ENCODE measurements at regions of chr12 and their contacts with region 1.

Region 1: GRCh38 chr12:120847392-120847791 is 56.8 kb downstream of the SPPL3 start:
- DNase-seq: no peak
- H3K4me3 Mint-ChIP-seq: no peak overlapping the region
- H3K27ac Mint-ChIP-seq: no peak overlapping the region
- H3K4me1 Mint-ChIP-seq: peaks cover 26% of the 10 kb centered on the region
- H3K27me3 Mint-ChIP-seq: no peaks in the 10 kb centered on the region

Region 2: DNA sequence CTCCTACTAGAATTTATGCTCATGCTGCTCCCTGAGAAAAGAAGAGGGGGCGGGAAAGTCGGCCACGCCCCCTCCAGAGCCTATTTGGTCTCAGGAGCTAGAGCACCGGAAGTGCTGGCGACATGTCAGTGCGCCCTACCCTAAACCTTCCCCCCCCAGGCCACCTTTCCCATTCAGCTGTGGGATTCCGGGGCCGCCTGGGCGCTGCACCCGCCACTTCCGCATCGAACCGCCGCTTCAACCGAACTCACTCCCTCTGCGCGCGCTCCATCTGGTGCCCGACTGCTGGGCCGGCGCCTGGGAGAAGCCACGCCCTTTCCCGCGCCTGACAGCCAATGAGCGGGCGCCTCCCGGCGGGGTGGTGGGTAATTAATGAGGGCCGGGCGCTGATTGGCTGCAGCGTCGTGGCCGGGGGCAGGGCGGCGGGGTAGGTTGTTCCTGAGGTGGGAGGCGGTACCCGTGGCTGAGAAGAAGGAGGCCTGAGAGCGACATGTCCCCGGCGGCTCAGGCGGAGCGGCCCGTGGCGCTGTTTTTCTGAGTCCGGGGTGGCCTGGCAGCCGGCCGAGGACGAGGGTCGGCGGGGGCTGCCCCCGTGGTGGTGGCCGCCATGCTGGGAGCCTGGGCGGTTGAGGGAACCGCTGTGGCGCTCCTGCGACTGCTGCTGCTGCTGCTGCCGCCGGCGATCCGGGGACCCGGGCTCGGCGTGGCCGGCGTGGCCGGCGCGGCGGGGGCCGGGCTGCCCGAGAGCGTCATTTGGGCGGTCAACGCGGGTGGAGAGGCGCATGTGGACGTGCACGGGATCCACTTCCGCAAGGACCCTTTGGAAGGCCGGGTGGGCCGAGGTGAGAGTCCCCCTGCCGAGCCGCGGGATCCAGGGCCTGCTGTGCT is 160.5 kb before region 1 on chr12 and contains the start of gene MLEC:
- CTCF ChIA-PET with region 1: no interaction called
- POLR2A ChIA-PET with region 1: no interaction called
- DNase-seq: peak; percentile 100
- H3K4me3 Mint-ChIP-seq: peak within 1 kb of the TSS; percentile 87
- H3K27ac Mint-ChIP-seq: peak within 1 kb of the TSS; percentile 87
- H3K4me1 Mint-ChIP-seq: peaks cover 63% of the 10 kb centered on the region
- H3K27me3 Mint-ChIP-seq: no peaks in the 10 kb centered on the region
- total RNA-seq, gene MLEC: 81.1 to 97.8 TPM

Region 3: GRCh38 chr12:120713861-120714482 is 133.4 kb before region 1 on chr12:
- CTCF ChIA-PET with region 1: no interaction called
- POLR2A ChIA-PET with region 1: no interaction called
- DNase-seq: peak; percentile 74
- H3K4me3 Mint-ChIP-seq: no peak overlapping the region
- H3K27ac Mint-ChIP-seq: no peak overlapping the region
- H3K4me1 Mint-ChIP-seq: peaks cover 43% of the 10 kb centered on the region
- H3K27me3 Mint-ChIP-seq: no peaks in the 10 kb centered on the region

Region 4: GRCh38 chr12:120833849-120834248 is 13.5 kb before region 1 on chr12:
- CTCF ChIA-PET with region 1: interaction called, 5 read pairs
- POLR2A ChIA-PET with region 1: interaction called, 12 read pairs
- DNase-seq: no peak
- H3K4me3 Mint-ChIP-seq: no peak overlapping the region
- H3K27ac Mint-ChIP-seq: no peak overlapping the region
- H3K4me1 Mint-ChIP-seq: peaks cover 31% of the 10 kb centered on the region
- H3K27me3 Mint-ChIP-seq: no peaks in the 10 kb centered on the region

Region 5: GRCh38 chr12:121499929-121500793 is 652.8 kb after region 1 on chr12:
- CTCF ChIA-PET with region 1: no interaction called
- POLR2A ChIA-PET with region 1: no interaction called
- DNase-seq: peak; percentile 73
- H3K4me3 Mint-ChIP-seq: no peak overlapping the region
- H3K27ac Mint-ChIP-seq: no peak overlapping the region
- H3K4me1 Mint-ChIP-seq: peaks cover 16% of the 10 kb centered on the region
- H3K27me3 Mint-ChIP-seq: no peaks in the 10 kb centered on the region